Sciatic nerve (tissue), 2 donors: ENCODE measurements at regions of chr9 and their contacts with region 1.

Region 1: GRCh38 chr9:89437000-89437631 is 60.8 kb downstream of the SEMA4D start:
- DNase-seq: no peak
- ATAC-seq: no peak

Region 2: GRCh38 chr9:89549031-89549644 is 112.0 kb after region 1 on chr9:
- intact Hi-C with region 1: loop called (anchors 10 kb)
- DNase-seq: peak; percentile 88
- ATAC-seq: peak; percentile 96